HepG2 (cell line): ENCODE measurements at regions of chr9 and their contacts with region 1.

Region 1: DNA sequence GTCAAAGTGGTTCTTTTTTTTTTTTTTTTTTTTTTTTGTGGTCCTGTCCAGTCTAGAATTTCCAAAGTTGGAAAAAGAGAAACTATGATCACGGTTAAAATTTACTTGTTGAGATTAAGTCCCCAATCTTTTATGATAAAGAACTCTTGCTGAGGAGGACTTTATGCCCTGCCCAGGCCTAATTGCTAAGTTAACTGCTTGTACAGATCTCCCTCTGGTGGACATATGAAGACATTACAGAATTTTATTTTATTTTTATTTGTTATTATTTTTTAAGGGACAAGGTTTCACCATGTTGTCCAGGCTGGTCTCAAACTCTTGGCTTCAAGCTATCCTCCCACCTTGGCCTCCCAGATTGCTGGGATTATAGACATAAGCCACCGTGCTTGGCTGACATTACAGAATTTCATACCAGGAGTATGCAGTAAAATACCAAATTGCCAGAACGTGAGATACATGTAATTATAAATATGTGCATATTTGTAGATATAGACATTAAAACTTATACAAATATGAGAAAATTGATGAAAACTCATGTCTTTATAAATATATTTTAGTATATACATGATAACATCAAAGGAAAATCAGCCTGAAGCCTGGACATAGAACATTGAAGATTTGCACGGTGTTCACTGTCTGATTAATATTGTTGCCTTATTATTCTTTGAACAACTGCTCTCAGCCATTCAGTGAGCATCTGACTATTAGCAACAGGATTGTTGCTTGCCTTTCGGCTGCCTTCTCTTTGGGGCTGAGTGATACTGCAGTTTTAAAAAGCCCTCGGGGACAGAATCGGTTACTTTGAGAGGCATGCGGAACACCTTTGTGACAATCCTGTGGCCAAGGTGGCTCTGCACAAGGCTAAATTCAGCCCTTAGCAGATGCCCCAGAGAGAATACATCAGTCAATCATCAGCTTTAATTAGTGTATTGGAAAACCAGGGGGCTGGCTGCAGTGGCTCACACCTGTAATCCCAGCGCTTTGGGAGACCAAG is 91.0 kb downstream of the RFK start:
- DNase-seq: peak; percentile 37
- ATAC-seq: peak; percentile 47; the same call in 2 of the 3 replicates
- H3K4me3 ChIP-seq: no peak overlapping the region
- H3K27ac ChIP-seq: no peak overlapping the region
- H3K4me1 ChIP-seq: no peaks in the 10 kb centered on the region
- H3K27me3 ChIP-seq: no peaks in the 10 kb centered on the region
- CTCF ChIP-seq: peak; percentile 55
- EP300 ChIP-seq: no peak
- POLR2A ChIP-seq: no peak
- RAD21 ChIP-seq: no peak

Region 2: DNA sequence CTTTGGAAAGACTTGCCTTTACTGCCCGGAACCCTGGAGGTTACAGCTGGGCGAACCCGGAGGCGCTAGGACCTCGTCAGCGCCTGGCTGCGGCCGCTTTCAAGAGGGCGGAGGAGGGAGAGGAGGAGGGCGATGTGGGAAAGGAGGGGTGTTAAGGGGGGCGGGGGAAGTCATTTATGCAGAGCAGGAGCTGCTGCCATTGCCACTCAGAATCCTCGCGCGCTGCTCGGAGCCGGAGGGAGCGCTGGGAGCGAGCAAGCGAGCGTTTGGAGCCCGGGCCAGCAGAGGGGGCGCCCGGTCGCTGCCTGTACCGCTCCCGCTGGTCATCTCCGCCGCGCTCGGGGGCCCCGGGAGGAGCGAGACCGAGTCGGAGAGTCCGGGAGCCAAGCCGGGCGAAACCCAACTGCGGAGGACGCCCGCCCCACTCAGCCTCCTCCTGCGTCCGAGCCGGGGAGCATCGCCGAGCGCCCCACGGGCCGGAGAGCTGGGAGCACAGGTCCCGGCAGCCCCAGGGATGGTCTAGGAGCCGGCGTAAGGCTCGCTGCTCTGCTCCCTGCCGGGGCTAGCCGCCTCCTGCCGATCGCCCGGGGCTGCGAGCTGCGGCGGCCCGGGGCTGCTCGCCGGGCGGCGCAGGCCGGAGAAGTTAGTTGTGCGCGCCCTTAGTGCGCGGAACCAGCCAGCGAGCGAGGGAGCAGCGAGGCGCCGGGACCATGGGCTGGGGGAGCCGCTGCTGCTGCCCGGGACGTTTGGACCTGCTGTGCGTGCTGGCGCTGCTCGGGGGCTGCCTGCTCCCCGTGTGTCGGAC is 412.6 kb before region 1 on chr9 and contains the start of gene PCSK5:
- CTCF ChIA-PET with region 1: interaction called, 3 read pairs
- POLR2A ChIA-PET with region 1: no interaction called
- in situ Hi-C with region 1: no loop called
- intact Hi-C with region 1: loop called (anchors 10 kb)
- DNase-seq: peak; percentile 58
- ATAC-seq: peak; percentile 93
- H3K4me3 ChIP-seq: peak within 1 kb of the TSS; percentile 60 to 77 (median 64)
- H3K27ac ChIP-seq: no peak within 1 kb of the TSS
- H3K4me1 ChIP-seq: peaks cover 19% of the 10 kb centered on the region
- H3K27me3 ChIP-seq: peaks cover 0 to 38% of the 10 kb centered on the region in 2 experiments; a peak in 4 of 5 replicates
- CTCF ChIP-seq: peak; percentile 49
- EP300 ChIP-seq: no peak
- POLR2A ChIP-seq: no peak
- RAD21 ChIP-seq: peak; percentile 44; the same call in 1 of the 2 replicates
- total RNA-seq, gene PCSK5: 0.11 and 0.55 TPM in 2 replicates

Region 3: GRCh38 chr9:75979146-75979761 is 324.0 kb before region 1 on chr9:
- CTCF ChIA-PET with region 1: interaction called, 3 read pairs
- POLR2A ChIA-PET with region 1: no interaction called
- in situ Hi-C with region 1: no loop called
- intact Hi-C with region 1: loop called (anchors 2 kb)
- DNase-seq: peak; percentile 18
- ATAC-seq: peak; percentile 81
- H3K4me3 ChIP-seq: no peak overlapping the region
- H3K27ac ChIP-seq: no peak overlapping the region
- H3K4me1 ChIP-seq: no peaks in the 10 kb centered on the region
- H3K27me3 ChIP-seq: no peaks in the 10 kb centered on the region
- CTCF ChIP-seq: peak; percentile 34
- EP300 ChIP-seq: no peak
- POLR2A ChIP-seq: no peak
- RAD21 ChIP-seq: no peak

Region 4: DNA sequence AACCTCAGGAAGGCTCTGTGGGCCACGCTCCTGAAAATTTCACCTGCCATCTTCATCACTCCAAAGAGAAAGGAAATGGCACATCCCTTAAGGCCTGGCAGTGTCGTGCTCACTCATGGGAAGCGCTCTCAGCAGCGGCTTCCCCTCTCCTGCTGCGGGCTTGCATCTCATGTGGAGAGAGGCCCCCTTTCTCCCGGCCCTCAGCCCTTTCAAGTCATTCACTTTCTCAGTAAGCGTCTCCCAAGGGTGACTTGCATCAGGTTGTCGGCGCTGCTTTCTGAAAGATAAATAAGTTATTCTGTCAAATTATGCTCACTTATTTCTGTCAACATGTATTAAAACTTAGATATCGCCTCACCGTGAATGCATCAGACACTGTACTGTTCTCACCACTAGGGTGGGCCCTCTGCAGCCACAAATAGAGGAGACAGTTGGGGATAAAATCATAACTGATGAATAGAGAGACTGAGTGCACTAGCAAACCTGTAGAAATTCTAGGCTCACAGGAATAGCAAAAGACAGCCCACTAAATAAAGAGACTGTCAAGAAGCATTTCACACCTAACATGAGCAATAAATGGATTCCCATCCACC is 83.6 kb before region 1 on chr9:
- CTCF ChIA-PET with region 1: interaction called, 4 read pairs
- POLR2A ChIA-PET with region 1: no interaction called
- in situ Hi-C with region 1: no loop called
- intact Hi-C with region 1: loop called (anchors 2 kb)
- DNase-seq: no peak
- ATAC-seq: peak; percentile 75
- H3K4me3 ChIP-seq: no peak overlapping the region
- H3K27ac ChIP-seq: no peak overlapping the region
- H3K4me1 ChIP-seq: no peaks in the 10 kb centered on the region
- H3K27me3 ChIP-seq: no peaks in the 10 kb centered on the region
- CTCF ChIP-seq: peak; percentile 7; the same call in 1 of the 2 replicates
- EP300 ChIP-seq: no peak
- POLR2A ChIP-seq: no peak
- RAD21 ChIP-seq: no peak

Region 5: DNA sequence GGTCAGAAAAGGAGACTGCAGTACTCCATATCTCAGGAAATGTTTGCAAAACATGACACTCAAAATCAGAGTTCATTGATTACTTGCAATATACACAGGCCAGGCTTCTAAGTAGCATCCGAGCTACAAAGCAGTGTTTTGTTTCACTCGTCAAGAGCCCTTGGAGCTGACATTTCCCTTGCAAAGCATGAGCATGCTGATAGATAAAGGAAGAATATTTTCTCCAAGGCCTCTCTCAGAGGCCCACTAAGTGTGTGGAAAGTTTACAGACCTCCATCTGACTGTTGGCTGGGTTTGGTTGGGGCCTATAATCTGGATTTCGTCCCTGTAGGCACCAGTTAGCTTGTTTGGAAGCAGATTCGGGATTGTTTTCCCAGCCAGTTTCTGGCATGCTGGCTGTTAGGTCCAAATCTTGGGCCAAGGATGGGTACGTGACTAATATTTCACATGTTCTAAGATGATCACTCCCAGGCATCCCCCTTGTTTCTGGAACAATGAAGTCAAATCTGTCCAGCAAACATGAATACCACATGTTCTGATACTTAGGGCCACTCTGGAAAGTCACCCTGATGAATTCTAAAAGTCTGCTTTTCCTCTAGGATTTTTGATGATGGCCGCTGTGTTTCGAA is 70.3 kb before region 1 on chr9:
- CTCF ChIA-PET with region 1: no interaction called
- POLR2A ChIA-PET with region 1: no interaction called
- in situ Hi-C with region 1: no loop called
- intact Hi-C with region 1: no loop called
- DNase-seq: no peak
- ATAC-seq: no peak
- H3K4me3 ChIP-seq: no peak overlapping the region
- H3K27ac ChIP-seq: no peak overlapping the region
- H3K4me1 ChIP-seq: no peaks in the 10 kb centered on the region
- H3K27me3 ChIP-seq: no peaks in the 10 kb centered on the region
- CTCF ChIP-seq: no peak
- EP300 ChIP-seq: no peak
- POLR2A ChIP-seq: no peak
- RAD21 ChIP-seq: no peak

Region 6: GRCh38 chr9:76365028-76365427 is 61.8 kb after region 1 on chr9:
- CTCF ChIA-PET with region 1: no interaction called
- POLR2A ChIA-PET with region 1: no interaction called
- in situ Hi-C with region 1: no loop called
- intact Hi-C with region 1: no loop called
- DNase-seq: peak; percentile 78
- ATAC-seq: peak; percentile 85
- H3K4me3 ChIP-seq: no peak overlapping the region
- H3K27ac ChIP-seq: no peak overlapping the region
- H3K4me1 ChIP-seq: peaks cover 58% of the 10 kb centered on the region
- H3K27me3 ChIP-seq: no peaks in the 10 kb centered on the region; a peak in 2 of 5 replicates
- CTCF ChIP-seq: no peak
- EP300 ChIP-seq: peak in 1 of 2 experiments; percentile 41; a peak in 1 of 4 replicates
- POLR2A ChIP-seq: no peak
- RAD21 ChIP-seq: no peak

Region 7: GRCh38 chr9:76704593-76705204 is 401.5 kb after region 1 on chr9:
- CTCF ChIA-PET with region 1: no interaction called
- POLR2A ChIA-PET with region 1: no interaction called
- in situ Hi-C with region 1: no loop called
- intact Hi-C with region 1: loop called (anchors 5 kb)
- DNase-seq: peak; percentile 58
- ATAC-seq: peak; percentile 64
- H3K4me3 ChIP-seq: no peak overlapping the region
- H3K27ac ChIP-seq: no peak overlapping the region
- H3K4me1 ChIP-seq: no peaks in the 10 kb centered on the region
- H3K27me3 ChIP-seq: peaks cover 0 to 22% of the 10 kb centered on the region in 2 experiments; a peak in 3 of 5 replicates
- CTCF ChIP-seq: peak; percentile 85
- EP300 ChIP-seq: no peak
- POLR2A ChIP-seq: no peak
- RAD21 ChIP-seq: peak; percentile 60; the same call in 1 of the 2 replicates